ENCODE measurements at regions of chr5 and their contacts with region 1.

Region 1: GRCh38 chr5:150486402-150487198 is 21.3 kb upstream of the NDST1 start:
- DNase-seq: peak; percentile 62
- ATAC-seq: peak; percentile 13 to 35

Region 2: DNA sequence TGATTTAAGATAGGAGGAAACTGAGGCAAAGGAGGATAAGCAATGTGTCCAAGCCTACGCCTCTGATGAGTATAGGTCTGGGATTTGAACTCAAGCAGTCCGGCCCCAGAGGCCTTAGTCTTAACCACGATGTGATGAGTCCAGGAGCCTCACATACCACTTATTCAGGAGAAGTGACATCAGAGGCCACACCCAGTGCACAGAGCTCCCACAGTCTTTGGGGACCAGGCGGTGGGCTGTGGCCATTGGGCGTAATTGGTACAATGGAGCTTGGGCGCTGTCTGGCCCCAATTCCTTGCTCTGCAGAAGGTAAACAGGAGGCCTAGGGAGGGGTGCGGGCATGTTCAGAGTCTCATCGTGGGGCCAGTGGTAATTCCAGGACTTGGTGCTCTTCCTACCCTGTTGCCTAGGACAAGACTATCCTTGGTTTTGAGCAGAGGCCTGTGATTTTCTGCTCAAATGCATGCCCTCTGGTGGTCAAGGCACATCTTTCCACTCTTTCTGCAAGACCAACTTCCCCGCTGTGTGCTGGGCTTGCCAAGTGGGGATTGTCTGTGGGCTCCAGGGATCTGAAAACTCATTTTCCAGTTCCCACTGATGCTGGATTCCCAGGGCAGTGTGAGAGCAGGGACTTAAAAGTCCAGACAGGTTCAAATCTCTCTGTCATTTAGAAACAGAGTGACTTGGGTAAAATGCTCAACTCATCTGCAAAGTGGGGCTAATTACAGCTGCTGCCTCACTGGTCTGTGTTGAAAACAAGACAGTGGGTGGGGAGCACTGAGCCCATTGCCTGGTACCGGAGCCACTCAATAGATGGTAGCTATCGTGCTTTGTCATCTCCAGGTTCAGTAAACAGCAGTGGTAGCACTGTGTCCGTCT is 37.1 kb after region 1 on chr5:
- intact Hi-C with region 1: loop called in 1 of 2 experiments (anchors 5 kb)
- DNase-seq: no peak
- ATAC-seq: peak; percentile 61 to 66

Region 3: GRCh38 chr5:150544611-150545219 is 58.1 kb after region 1 on chr5:
- intact Hi-C with region 1: loop called in 1 of 2 experiments (anchors 5 kb)
- DNase-seq: peak; percentile 78
- ATAC-seq: peak; percentile 78 to 87

Region 4: DNA sequence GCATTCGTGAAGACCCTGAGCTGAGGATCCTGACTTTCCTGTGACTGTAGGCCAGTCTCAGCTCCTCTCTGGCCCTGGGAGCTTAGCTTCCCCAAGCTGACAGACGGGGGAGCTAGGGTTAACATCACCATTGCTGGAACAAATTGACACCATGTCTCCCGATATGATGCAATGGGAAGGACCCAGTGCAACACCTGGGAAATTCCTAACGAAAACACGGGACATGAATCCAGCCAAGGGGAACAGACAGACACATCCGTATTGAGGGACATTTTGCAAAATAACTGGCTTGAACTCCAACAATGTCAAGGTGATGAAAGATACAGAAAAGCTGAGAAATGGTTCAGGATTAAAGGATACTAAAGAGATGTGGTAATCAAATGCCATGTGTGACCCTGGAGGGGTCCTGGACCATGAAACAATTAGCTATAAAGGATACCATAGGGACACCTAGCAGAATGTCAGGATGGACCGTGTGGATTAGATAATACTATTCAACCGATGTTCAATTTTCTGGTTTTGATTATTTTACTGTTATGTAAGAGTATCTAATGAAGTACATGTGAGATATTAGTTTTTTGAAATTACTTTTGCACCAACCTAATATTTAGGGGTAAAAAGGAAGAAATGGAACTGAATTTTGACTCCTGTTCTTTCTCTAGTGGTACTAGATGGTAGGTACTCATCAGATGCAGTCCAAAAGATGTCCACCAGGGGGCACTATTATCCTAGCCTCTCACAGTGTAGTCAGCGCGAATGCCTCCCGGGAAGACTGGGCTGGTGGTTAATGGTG is 74.0 kb after region 1 on chr5:
- intact Hi-C with region 1: no loop called
- DNase-seq: peak; percentile 84
- ATAC-seq: peak; percentile 89 to 92

Region 5: GRCh38 chr5:150589871-150590601 is 103.4 kb after region 1 on chr5:
- intact Hi-C with region 1: no loop called
- DNase-seq: peak; percentile 84
- ATAC-seq: peak; percentile 75 to 76

Region 6: GRCh38 chr5:150640311-150641005 is 153.9 kb after region 1 on chr5 and contains the start of gene SYNPO:
- intact Hi-C with region 1: no loop called
- DNase-seq: peak; percentile 86
- ATAC-seq: peak; percentile 62 to 74
- total RNA-seq, gene SYNPO: 503 to 769 TPM

Region 7: DNA sequence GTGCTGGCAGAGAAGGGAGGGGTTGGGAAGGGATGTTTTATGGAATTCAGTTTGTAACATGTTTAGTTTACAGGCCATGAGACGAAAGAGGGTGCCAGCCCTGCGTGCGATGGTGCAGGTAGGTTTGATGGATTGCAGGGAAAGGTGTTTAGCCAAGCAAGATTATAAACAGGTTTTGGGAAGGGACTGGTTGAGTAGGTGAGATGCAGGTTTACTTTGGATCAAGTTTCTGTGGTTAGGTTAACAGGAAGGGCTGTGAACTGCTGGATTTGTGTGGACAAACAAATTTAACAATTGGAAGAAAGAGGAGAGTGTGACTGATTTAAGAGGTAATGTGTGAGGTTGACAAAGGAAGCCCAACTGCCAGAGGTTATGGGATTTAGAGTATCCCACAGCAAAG is 501.1 kb after region 1 on chr5:
- intact Hi-C with region 1: no loop called
- DNase-seq: no peak
- ATAC-seq: no peak

Measured in left cardiac atrium (tissue), 4 donors.